ENCODE measurements at regions of chr17 and their contacts with region 1.

Region 1: GRCh38 chr17:79839363-79840268 is at the start of gene CBX4:
- DNase-seq: peak; percentile 87 to 97
- ATAC-seq: peak; percentile 61 to 73
- H3K4me3 ChIP-seq: peak within 1 kb of the TSS; percentile 82
- H3K27ac ChIP-seq: peak within 1 kb of the TSS; percentile 95 to 98
- H3K4me1 ChIP-seq: peaks cover 52% of the 10 kb centered on the region
- CTCF ChIP-seq: peak; percentile 99
- EP300 ChIP-seq: peak in 1 of 2 experiments; percentile 55; a peak in 1 of 5 replicates
- POLR2A ChIP-seq: peak; percentile 77
- RAD21 ChIP-seq: peak; percentile 55 to 90
- polyA plus RNA-seq, gene CBX4: 21.9 and 34.1 TPM in 2 replicates

Region 2: GRCh38 chr17:79520167-79521165 is 319.1 kb before region 1 on chr17:
- CTCF ChIA-PET with region 1: no interaction called
- POLR2A ChIA-PET with region 1: no interaction called
- DNase-seq: no peak
- ATAC-seq: no peak
- H3K4me3 ChIP-seq: no peak overlapping the region
- H3K27ac ChIP-seq: no peak overlapping the region; a peak in 1 of 6 replicates
- H3K4me1 ChIP-seq: peaks cover 35% of the 10 kb centered on the region
- CTCF ChIP-seq: no peak
- EP300 ChIP-seq: no peak
- POLR2A ChIP-seq: no peak
- RAD21 ChIP-seq: no peak

Region 3: GRCh38 chr17:79651761-79652160 is 187.9 kb before region 1 on chr17:
- CTCF ChIA-PET with region 1: no interaction called
- POLR2A ChIA-PET with region 1: no interaction called
- DNase-seq: no peak
- ATAC-seq: no peak
- H3K4me3 ChIP-seq: no peak overlapping the region
- H3K27ac ChIP-seq: no peak overlapping the region
- H3K4me1 ChIP-seq: no peaks in the 10 kb centered on the region
- CTCF ChIP-seq: no peak
- EP300 ChIP-seq: no peak
- POLR2A ChIP-seq: no peak
- RAD21 ChIP-seq: no peak

Region 4: GRCh38 chr17:79747508-79748295 is 91.9 kb before region 1 on chr17:
- CTCF ChIA-PET with region 1: interaction called, 28 read pairs
- POLR2A ChIA-PET with region 1: interaction called, 6 read pairs
- DNase-seq: no peak
- ATAC-seq: no peak
- H3K4me3 ChIP-seq: peak overlapping the region; percentile 21; the same call in 1 of the 3 replicates
- H3K27ac ChIP-seq: peak overlapping the region; percentile 5 to 65; a peak in 3 of 6 replicates
- H3K4me1 ChIP-seq: peaks cover 34% of the 10 kb centered on the region
- CTCF ChIP-seq: no peak
- EP300 ChIP-seq: no peak
- POLR2A ChIP-seq: no peak
- RAD21 ChIP-seq: no peak

Region 5: GRCh38 chr17:79796763-79797491 is 42.7 kb before region 1 on chr17 and contains the start of gene CBX8:
- CTCF ChIA-PET with region 1: interaction called, 1,281 read pairs
- POLR2A ChIA-PET with region 1: interaction called, 23 read pairs
- DNase-seq: peak; percentile 98 to 100
- ATAC-seq: peak; percentile 65 to 75
- H3K4me3 ChIP-seq: peak within 1 kb of the TSS; percentile 73
- H3K27ac ChIP-seq: peak within 1 kb of the TSS; percentile 97 to 98
- H3K4me1 ChIP-seq: peaks cover 35% of the 10 kb centered on the region
- CTCF ChIP-seq: no peak
- EP300 ChIP-seq: peak in 1 of 2 experiments; percentile 28; a peak in 1 of 5 replicates
- POLR2A ChIP-seq: peak; percentile 74
- RAD21 ChIP-seq: no peak
- polyA plus RNA-seq, gene CBX8: 1.5 and 2.8 TPM in 2 replicates

Region 6: DNA sequence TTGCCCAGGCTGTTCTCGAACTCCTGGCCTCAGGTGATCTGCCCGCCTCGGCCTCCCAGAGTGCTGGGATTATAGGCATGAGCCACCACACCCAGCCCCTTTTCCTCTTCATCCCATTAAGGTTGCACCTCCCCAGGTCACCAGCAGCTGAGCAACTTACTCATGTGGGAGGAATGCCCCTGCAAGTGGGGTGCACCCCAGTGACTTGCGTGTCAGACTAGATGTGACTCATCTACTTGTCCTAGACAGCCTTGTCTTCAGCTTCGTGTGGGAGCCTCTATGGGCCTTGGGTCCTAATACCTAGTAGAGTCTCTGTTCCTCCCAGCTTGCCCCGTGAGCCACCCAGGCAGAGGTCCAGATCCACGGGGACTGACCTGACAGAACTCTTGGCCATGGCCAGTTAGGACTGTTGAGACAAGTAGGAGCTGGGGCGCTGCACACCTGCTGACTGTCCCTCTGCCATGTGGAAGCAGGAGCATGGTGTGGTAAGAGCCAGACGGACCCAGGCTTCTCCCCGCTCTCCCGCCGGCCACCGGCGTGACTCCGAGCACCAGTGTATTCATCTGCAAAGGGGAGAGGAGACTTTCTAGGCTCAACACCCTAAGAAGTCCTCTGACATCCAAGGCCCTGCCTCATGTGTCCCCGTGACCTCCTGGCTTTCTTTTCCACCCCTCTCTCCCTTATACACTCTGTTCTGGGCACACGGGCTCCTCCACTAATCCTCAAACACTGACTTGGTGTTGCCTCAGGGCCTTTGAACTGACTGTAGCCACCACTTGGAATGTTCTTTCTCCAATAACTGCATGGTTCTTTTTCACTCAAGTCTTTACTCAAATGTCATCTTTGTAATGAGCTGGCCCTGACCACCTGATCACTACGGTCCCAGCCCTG is 11.2 kb after region 1 on chr17:
- CTCF ChIA-PET with region 1: interaction called, 75 read pairs
- POLR2A ChIA-PET with region 1: interaction called, 12 read pairs
- DNase-seq: peak; percentile 90 to 99
- ATAC-seq: peak; percentile 78 to 87
- H3K4me3 ChIP-seq: no peak overlapping the region
- H3K27ac ChIP-seq: peak overlapping the region; percentile 71 to 83
- H3K4me1 ChIP-seq: peaks cover 36% of the 10 kb centered on the region
- CTCF ChIP-seq: no peak
- EP300 ChIP-seq: no peak; a peak in 1 of 5 replicates
- POLR2A ChIP-seq: no peak
- RAD21 ChIP-seq: peak; percentile 13 to 17; a peak in 1 of 5 replicates

Region 7: GRCh38 chr17:79905832-79906231 is 66.2 kb after region 1 on chr17:
- CTCF ChIA-PET with region 1: interaction called, 11 read pairs
- POLR2A ChIA-PET with region 1: interaction called, 4 read pairs
- DNase-seq: peak; percentile 75 to 77
- ATAC-seq: peak; percentile 89 to 92
- H3K4me3 ChIP-seq: no peak overlapping the region
- H3K27ac ChIP-seq: no peak overlapping the region; a peak in 1 of 6 replicates
- H3K4me1 ChIP-seq: peaks cover 19% of the 10 kb centered on the region
- CTCF ChIP-seq: peak; percentile 35; the same call in 2 of the 3 replicates
- EP300 ChIP-seq: no peak
- POLR2A ChIP-seq: no peak
- RAD21 ChIP-seq: no peak; a peak in 1 of 5 replicates

Region 8: GRCh38 chr17:79937391-79938335 is 98.0 kb after region 1 on chr17:
- CTCF ChIA-PET with region 1: interaction called, 10 read pairs
- POLR2A ChIA-PET with region 1: no interaction called
- DNase-seq: no peak
- ATAC-seq: no peak
- H3K4me3 ChIP-seq: no peak overlapping the region
- H3K27ac ChIP-seq: peak overlapping the region in 1 of 2 experiments; percentile 45; a peak in 2 of 6 replicates
- H3K4me1 ChIP-seq: peaks cover 45% of the 10 kb centered on the region
- CTCF ChIP-seq: no peak
- EP300 ChIP-seq: no peak
- POLR2A ChIP-seq: no peak
- RAD21 ChIP-seq: no peak

Region 9: DNA sequence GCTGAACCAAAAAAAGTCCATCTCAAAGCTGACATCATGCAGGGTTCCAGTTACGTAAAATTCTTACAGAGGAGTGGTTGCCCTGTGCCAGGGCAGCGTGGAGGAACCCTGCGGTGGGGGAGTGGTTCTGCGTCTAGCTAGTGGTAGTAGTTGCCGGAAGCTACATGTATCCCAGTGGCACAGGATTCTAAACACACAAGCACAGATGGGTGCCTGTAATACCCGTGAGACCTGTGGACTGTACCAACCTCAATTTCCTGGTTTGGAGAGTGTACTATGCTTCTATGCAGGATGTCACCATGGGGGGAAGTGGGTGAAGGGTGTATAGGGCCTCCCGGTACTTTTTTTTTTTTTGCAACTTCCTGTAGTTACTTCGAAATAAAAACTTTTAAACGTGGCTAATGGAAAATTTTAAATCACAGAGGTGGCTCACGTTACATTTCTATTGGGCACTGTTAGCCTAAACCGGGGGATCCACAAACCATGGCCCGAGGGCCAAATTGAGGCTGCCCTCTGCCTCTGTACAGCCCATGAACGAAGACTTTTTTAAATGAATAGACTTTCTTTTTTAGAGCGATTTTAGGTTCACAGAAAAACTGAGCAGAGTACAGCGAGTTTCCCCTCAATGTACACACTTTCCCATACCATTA is 157.5 kb after region 1 on chr17:
- CTCF ChIA-PET with region 1: interaction called, 47 read pairs
- POLR2A ChIA-PET with region 1: interaction called, 38 read pairs
- DNase-seq: no peak
- ATAC-seq: no peak
- H3K4me3 ChIP-seq: no peak overlapping the region
- H3K27ac ChIP-seq: peak overlapping the region; percentile 28 to 48; a peak in 3 of 6 replicates
- H3K4me1 ChIP-seq: peaks cover 33% of the 10 kb centered on the region
- CTCF ChIP-seq: no peak
- EP300 ChIP-seq: no peak
- POLR2A ChIP-seq: no peak
- RAD21 ChIP-seq: no peak

Measured in A549 (cell line).